ENCODE measurements at regions of chr7 and their contacts with region 1.

Region 1: DNA sequence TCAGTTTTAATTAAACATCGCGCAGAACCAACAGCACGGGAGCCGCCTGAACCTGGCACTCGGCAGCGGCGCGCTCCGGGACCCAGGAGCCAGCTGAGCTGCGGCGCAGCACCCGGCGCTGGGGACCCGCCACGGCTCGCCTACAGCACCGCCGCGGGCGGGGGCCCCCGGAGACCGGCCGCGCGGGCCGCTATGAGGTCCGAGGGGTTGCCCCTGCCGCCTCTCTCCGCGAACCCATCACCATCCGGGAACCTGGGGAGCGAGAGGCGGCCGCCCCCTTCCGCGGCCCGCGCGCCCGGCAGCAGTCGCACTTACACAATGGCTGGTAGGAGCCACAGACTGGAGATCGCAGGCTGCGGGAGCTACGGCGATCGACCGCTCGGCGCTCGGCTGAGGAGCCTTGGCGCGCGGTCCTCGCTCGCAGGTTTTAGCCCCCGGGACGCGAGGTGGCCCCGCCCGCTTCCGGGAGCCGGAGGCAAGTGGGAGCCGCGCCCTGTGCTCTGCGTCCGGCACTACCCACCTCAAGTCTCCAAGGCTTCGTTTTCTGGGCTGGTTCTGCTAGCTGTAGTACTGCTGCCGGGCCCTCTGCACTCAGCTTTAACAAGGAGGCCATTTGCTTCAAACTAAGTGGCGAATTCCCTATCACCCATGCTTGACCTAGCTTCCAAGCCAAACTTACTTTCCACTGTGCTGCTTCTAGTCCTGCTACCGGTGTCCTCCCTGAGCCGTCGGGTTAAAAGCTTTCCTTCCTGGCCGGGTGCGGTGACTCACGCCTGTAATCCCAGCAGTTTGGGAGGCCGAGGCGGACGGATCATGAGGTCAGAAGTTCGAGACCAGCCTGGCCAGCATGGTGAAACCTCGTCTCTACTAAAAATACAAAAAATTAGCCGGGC is at the start of gene TPK1:
- DNase-seq: peak; percentile 93 to 96 (median 95)
- ATAC-seq: peak; percentile 96 to 98 (median 98)
- H3K4me3 ChIP-seq: peak within 1 kb of the TSS; percentile 65 to 95 (median 78)
- H3K27ac ChIP-seq: peak within 1 kb of the TSS; percentile 93 to 99 (median 96)
- H3K4me1 ChIP-seq: peaks cover 0 to 18% (median 11%) of the 10 kb centered on the region in 12 donors
- H3K27me3 ChIP-seq: no peaks in the 10 kb centered on the region
- CTCF ChIP-seq: peak in 2 of 12 donors; percentile 14 to 25
- POLR2A ChIP-seq: peak in 1 of 2 donors; percentile 89
- total RNA-seq, gene TPK1: 2.0 to 8.2 (median 5.3) TPM

Region 2: GRCh38 chr7:144519925-144520324 is 316.0 kb before region 1 on chr7:
- intact Hi-C with region 1: loop called in 1 of 10 experiments (anchors 5 kb)
- DNase-seq: no peak
- ATAC-seq: no peak
- H3K4me3 ChIP-seq: no peak overlapping the region
- H3K27ac ChIP-seq: no peak overlapping the region
- H3K4me1 ChIP-seq: peaks cover 0 to 24% (median 14%) of the 10 kb centered on the region in 12 donors
- H3K27me3 ChIP-seq: no peaks in the 10 kb centered on the region
- CTCF ChIP-seq: no peak
- POLR2A ChIP-seq: no peak

Region 3: DNA sequence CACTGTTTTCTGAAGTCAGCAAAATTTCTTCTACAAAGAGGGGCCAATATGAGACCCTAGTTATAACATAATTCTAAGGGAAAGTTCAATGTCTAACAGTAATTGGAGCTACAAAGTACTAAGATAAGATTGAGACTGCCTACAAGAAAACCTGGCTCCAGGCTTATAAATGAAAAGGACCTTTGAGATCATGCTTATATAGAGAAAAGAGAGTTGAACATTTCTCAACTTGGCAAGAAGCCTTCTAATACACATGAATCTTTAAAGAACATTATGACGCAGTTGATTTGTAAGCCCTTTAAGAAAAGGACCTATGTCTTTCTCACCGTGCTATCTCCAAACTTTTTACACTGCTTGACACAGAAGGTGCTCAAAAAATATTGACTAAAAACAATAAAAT is 88.0 kb before region 1 on chr7:
- intact Hi-C with region 1: no loop called
- DNase-seq: no peak
- ATAC-seq: no peak
- H3K4me3 ChIP-seq: no peak overlapping the region
- H3K27ac ChIP-seq: no peak overlapping the region
- H3K4me1 ChIP-seq: no peaks in the 10 kb centered on the region
- H3K27me3 ChIP-seq: no peaks in the 10 kb centered on the region
- CTCF ChIP-seq: no peak
- POLR2A ChIP-seq: no peak